Activated CD4-positive, alpha-beta memory T cell treated with anti-CD3 and anti-CD28 coated beads for 36 hours (primary cell): ENCODE measurements at regions of chr3 and their contacts with region 1.

Region 1: GRCh38 chr3:119891944-119892721 is 110.2 kb downstream of the NR1I2 start:
- DNase-seq: peak; percentile 35
- H3K4me3 Mint-ChIP-seq: no peak overlapping the region
- H3K27ac Mint-ChIP-seq: no peak overlapping the region
- H3K4me1 Mint-ChIP-seq: peaks cover 13% of the 10 kb centered on the region
- H3K27me3 Mint-ChIP-seq: no peaks in the 10 kb centered on the region

Region 2: GRCh38 chr3:119856695-119857094 is 35.4 kb before region 1 on chr3:
- CTCF ChIA-PET with region 1: no interaction called
- POLR2A ChIA-PET with region 1: no interaction called
- intact Hi-C with region 1: no loop called
- DNase-seq: no peak
- H3K4me3 Mint-ChIP-seq: no peak overlapping the region
- H3K27ac Mint-ChIP-seq: no peak overlapping the region
- H3K4me1 Mint-ChIP-seq: peaks cover 6% of the 10 kb centered on the region
- H3K27me3 Mint-ChIP-seq: no peaks in the 10 kb centered on the region

Region 3: DNA sequence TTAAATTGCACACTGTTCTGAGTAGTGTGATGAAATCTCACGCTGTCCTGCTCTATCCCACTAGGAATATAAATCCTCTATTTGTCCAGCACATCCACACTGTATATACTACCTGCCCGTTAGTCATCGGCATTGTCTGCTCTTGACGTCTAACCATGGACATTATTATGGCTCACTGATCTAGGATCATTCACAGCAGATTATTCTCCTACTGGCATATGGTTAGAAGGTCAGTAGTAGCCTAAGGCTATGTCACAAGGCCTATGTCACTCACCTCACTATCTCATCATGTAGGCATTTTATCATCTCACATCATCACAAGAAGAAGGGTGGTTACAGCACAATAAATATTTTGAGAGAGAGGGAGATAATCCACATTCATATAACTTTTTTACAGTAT is 81.2 kb after region 1 on chr3:
- CTCF ChIA-PET with region 1: no interaction called
- POLR2A ChIA-PET with region 1: no interaction called
- intact Hi-C with region 1: no loop called
- DNase-seq: no peak
- H3K4me3 Mint-ChIP-seq: no peak overlapping the region
- H3K27ac Mint-ChIP-seq: no peak overlapping the region
- H3K4me1 Mint-ChIP-seq: peaks cover 22% of the 10 kb centered on the region
- H3K27me3 Mint-ChIP-seq: no peaks in the 10 kb centered on the region

Region 4: GRCh38 chr3:120147072-120147871 is 255.1 kb after region 1 on chr3:
- CTCF ChIA-PET with region 1: interaction called, 34 read pairs
- POLR2A ChIA-PET with region 1: no interaction called
- intact Hi-C with region 1: loop called (anchors 1 kb)
- DNase-seq: peak; percentile 53
- H3K4me3 Mint-ChIP-seq: no peak overlapping the region
- H3K27ac Mint-ChIP-seq: no peak overlapping the region
- H3K4me1 Mint-ChIP-seq: peaks cover 18% of the 10 kb centered on the region
- H3K27me3 Mint-ChIP-seq: no peaks in the 10 kb centered on the region

Region 5: DNA sequence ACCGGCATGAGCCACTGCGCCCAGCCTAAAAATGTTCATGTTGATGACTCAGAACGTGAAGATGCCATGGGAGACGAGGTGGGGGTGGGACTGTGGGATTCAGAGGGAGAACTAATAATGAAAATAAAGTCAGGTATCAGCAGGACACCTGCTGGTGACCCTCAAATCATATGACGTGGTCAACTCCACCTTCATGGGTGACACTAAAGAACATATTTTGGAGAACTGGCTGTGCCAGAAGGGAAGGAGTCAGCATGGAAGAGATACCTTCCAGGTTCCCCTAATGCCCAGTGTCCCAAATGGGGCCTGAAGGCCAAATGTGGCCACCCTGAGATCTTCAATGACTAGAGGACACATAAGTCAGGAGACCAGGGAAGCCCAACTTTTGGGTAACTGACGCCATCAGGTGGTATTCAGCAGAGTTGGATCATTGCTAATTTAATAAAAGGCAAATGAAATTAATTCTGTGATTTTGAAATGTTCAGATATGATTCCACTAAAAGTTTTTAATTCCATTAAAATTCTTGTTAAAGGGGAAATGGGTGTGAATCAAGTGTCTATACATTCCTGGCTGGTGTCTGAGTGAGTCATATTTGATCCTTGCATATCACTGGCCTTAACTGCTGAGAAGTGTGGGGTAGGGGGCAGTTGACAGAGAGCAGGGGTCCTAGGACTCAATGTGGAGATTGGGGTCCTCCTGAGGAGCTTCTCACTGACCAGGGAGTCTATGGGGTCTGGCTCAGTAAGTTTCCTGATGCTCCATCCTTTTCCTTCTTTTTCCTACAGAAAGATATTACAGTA is 290.8 kb after region 1 on chr3:
- CTCF ChIA-PET with region 1: interaction called, 14 read pairs
- POLR2A ChIA-PET with region 1: no interaction called
- intact Hi-C with region 1: loop called (anchors 2 kb)
- DNase-seq: no peak
- H3K4me3 Mint-ChIP-seq: no peak overlapping the region
- H3K27ac Mint-ChIP-seq: no peak overlapping the region
- H3K4me1 Mint-ChIP-seq: no peaks in the 10 kb centered on the region
- H3K27me3 Mint-ChIP-seq: peaks cover 4% of the 10 kb centered on the region

Region 6: DNA sequence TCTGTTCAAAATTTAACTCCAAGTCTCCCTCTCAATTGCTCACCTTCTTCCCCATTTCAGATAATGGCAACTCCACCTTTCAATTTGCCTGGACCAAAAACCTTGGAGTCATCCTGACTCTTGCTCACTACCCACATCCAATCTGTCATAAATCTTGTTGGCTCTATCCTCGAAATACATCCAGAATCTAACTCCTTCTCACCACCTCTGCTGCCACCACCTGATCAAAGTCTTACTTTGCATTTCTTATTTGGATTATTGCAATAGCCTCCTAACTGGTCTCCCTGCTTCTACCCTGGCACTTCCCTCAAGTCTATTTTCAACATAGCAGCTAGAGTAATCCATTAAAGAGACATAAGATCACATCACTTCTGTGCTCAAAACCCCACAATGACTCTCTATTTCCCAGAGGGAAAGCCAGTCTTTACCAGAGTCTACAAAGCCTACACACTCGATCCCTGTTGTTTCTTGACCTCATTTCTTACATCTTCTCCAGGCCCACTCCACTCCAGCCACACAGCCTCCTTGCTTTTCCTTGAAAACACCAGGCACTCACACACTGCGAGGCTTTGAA is 306.3 kb after region 1 on chr3:
- CTCF ChIA-PET with region 1: interaction called, 8 read pairs
- POLR2A ChIA-PET with region 1: no interaction called
- intact Hi-C with region 1: loop called (anchors 1 kb)
- DNase-seq: no peak
- H3K4me3 Mint-ChIP-seq: no peak overlapping the region
- H3K27ac Mint-ChIP-seq: no peak overlapping the region
- H3K4me1 Mint-ChIP-seq: no peaks in the 10 kb centered on the region
- H3K27me3 Mint-ChIP-seq: no peaks in the 10 kb centered on the region